ENCODE measurements at regions of chr19 and their contacts with region 1.

Region 1: DNA sequence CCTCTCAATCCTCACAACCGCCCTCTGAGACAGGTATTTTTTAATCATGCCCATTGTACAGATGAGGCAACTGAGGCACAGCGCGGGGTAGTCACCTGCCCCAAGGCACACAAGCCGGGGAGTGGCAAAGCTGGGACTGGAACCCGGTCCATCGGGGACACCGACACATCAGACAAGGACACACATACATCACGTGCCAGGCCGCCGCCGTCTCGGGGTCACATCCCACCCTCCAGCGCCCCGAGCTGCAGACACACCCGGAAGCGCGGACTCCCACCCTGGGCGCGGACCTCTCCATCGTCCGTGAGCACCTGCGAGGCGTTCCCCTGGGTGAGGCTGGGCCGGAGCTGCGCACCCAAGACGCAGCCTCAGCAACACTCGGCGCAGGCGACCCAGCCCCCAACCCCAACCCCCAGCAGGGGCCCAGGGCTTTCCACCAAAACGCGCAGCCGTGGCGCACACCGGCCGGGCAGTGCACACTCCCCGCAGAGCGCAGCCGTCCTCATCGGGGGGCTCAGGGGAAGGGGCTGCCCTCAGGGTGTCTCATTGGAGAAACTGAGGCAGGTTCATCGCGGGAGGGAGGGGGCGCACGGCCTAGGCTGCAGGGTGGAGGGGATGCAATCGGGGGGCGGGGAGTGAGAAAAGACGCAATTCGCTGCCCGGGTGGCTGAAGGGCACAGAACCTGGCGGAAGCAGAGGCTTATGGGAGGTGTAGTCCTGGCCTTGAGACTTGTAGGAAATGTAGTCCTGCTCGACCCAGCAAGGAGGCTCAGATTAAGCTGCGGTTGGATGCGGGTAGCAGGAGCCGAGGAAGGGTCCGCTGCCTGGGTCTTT is 1.9 kb upstream of the LMTK3 start:
- DNase-seq: peak in 8 of 9 donors; percentile 69 to 84 (median 78)
- ATAC-seq: peak; percentile 77
- H3K4me3 ChIP-seq: peak overlapping the region; percentile 72
- H3K4me3 Mint-ChIP-seq: no peak overlapping the region
- H3K27ac ChIP-seq: peak overlapping the region; percentile 82
- H3K27ac Mint-ChIP-seq: peak overlapping the region in 3 of 9 donors; percentile 68 to 91 (median 90)
- H3K4me1 ChIP-seq: peaks cover 21 to 22% of the 10 kb centered on the region in 2 donors
- H3K4me1 Mint-ChIP-seq: peaks cover 11 to 18% (median 13%) of the 10 kb centered on the region in 7 donors
- H3K27me3 ChIP-seq: no peaks in the 10 kb centered on the region
- H3K27me3 Mint-ChIP-seq: no peaks in the 10 kb centered on the region

Region 2: DNA sequence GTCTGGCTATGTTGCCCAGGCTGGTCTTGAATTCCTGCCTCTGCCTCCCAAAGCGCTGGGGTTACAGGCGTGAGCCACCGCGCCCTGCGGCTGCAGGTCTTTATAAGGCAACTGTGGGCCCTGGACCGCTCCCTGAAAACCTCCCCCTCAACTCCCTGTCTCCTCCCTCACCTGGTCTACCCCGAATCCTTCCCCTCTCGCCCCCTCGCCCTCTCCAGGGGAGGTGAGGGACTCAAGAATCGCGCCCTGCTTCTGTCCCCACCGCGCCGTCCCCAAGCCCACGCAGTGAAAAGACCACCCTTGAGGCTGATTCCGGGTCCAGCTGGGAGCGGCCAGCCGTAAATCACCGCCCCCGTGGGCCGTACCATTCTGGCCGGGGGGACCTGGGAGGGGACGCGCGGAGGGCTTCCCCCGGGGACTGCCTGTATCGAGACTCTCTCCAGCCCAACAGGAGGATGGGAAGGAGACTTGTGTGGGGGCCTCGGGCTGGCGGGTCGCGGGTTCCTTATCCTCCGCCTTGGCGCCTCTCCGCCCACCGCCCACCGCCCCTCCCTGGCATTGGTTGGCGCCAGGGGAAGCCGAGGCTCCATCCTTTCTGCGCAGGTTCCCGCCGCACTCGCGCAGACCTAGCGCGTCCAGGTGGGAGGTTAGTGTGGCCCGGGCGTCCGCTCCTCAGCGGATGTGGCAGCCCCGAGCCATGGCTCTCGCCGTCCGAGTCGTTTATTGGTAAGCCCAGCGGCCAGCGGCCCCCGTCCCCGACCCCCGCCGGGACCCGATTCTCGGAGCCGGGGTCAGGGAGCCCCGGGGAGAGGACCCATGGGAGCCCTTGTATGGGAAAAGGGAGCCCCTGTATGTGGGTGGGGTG is 735.2 kb before region 1 on chr19 and contains the start of gene SELENOW:
- CTCF ChIA-PET with region 1: no interaction called
- POLR2A ChIA-PET with region 1: no interaction called
- intact Hi-C with region 1: loop called in 1 of 2 experiments (anchors 5 kb)
- DNase-seq: peak; percentile 56 to 86 (median 76)
- ATAC-seq: peak; percentile 95
- H3K4me3 ChIP-seq: peak within 1 kb of the TSS; percentile 88
- H3K4me3 Mint-ChIP-seq: peak within 1 kb of the TSS; percentile 84 to 99 (median 93)
- H3K27ac ChIP-seq: peak within 1 kb of the TSS; percentile 87
- H3K27ac Mint-ChIP-seq: peak within 1 kb of the TSS; percentile 70 to 96 (median 91)
- H3K4me1 ChIP-seq: peaks cover 8 to 19% of the 10 kb centered on the region in 2 donors
- H3K4me1 Mint-ChIP-seq: peaks cover 8 to 40% (median 32%) of the 10 kb centered on the region in 7 donors
- H3K27me3 ChIP-seq: no peaks in the 10 kb centered on the region
- H3K27me3 Mint-ChIP-seq: no peaks in the 10 kb centered on the region
- total RNA-seq, gene SELENOW: 67.5 to 116 (median 101) TPM

Region 3: GRCh38 chr19:48363810-48364563 is 149.5 kb before region 1 on chr19 and contains the starts of genes SYNGR4 and TMEM143:
- CTCF ChIA-PET with region 1: no interaction called
- POLR2A ChIA-PET with region 1: no interaction called
- intact Hi-C with region 1: loop called (anchors 1 to 5 kb)
- DNase-seq: peak; percentile 91 to 100 (median 99)
- ATAC-seq: peak; percentile 96
- H3K4me3 ChIP-seq: peak within 1 kb of the TSS; percentile 87
- H3K4me3 Mint-ChIP-seq: peak within 1 kb of the TSS; percentile 80 to 97 (median 92)
- H3K27ac ChIP-seq: peak within 1 kb of the TSS; percentile 86
- H3K27ac Mint-ChIP-seq: peak within 1 kb of the TSS; percentile 89 to 98 (median 95)
- H3K4me1 ChIP-seq: peaks cover 9 to 13% of the 10 kb centered on the region in 2 donors
- H3K4me1 Mint-ChIP-seq: peaks cover 0 to 28% (median 6%) of the 10 kb centered on the region in 7 donors
- H3K27me3 ChIP-seq: no peaks in the 10 kb centered on the region
- H3K27me3 Mint-ChIP-seq: peaks cover 0 to 3% (median 0%) of the 10 kb centered on the region in 5 donors
- total RNA-seq, gene SYNGR4: not detected
- total RNA-seq, gene TMEM143: 11.6 to 39.8 (median 20.1) TPM

Region 4: DNA sequence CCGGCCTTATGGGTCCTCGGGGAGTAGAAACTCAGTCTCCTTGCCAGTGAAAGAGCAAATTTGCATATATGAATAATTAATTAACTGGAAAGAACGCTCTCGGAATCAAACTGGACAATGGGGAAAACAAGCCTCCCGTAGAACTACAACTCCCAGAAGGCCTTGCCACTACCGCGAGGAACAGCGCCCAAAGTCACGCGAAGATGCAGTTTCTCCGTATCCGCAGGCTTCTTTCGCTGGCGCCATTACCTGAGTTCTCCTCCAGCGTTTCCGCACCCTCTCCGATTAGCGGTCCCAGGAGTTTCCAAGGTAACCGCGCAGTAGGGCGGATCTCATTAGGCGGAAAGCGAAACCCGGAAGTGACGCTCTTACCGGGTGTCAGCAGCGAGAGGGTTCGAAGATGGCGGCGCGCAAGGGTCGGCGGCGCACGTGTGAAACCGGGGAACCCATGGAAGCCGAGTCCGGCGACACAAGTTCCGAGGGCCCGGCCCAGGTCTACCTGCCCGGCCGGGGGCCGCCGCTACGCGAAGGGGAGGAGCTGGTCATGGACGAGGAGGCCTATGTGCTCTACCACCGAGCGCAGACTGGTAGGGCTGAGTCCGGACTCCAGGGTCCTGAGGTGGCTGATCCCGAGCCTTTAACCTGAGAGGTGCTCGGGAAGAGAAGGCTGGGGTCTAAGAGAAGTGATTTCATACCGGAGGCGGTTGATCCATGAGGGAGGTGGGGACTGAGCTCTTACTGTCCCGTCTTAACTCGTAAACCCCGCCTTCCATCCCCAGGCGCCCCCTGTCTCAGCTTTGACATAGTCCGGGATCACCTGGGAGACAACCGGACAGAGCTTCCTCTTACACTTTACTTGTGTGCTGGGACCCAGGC is 67.7 kb before region 1 on chr19 and contains the start of gene GRWD1:
- CTCF ChIA-PET with region 1: interaction called, 3 read pairs
- POLR2A ChIA-PET with region 1: no interaction called
- intact Hi-C with region 1: loop called in 1 of 2 experiments (anchors 1 kb)
- DNase-seq: peak; percentile 63 to 98 (median 93)
- ATAC-seq: peak; percentile 95
- H3K4me3 ChIP-seq: peak within 1 kb of the TSS; percentile 80
- H3K4me3 Mint-ChIP-seq: peak within 1 kb of the TSS; percentile 87 to 96 (median 93)
- H3K27ac ChIP-seq: peak within 1 kb of the TSS; percentile 83
- H3K27ac Mint-ChIP-seq: peak within 1 kb of the TSS; percentile 90 to 98 (median 95)
- H3K4me1 ChIP-seq: peaks cover 20 to 22% of the 10 kb centered on the region in 2 donors
- H3K4me1 Mint-ChIP-seq: peaks cover 19 to 44% (median 37%) of the 10 kb centered on the region in 7 donors
- H3K27me3 ChIP-seq: peaks cover 0 to 8% of the 10 kb centered on the region in 2 donors
- H3K27me3 Mint-ChIP-seq: peaks cover 12 to 33% (median 21%) of the 10 kb centered on the region in 5 donors
- total RNA-seq, gene GRWD1: 26.1 to 45.8 (median 36.3) TPM

Region 5: GRCh38 chr19:48501496-48502350 is 11.8 kb before region 1 on chr19:
- CTCF ChIA-PET with region 1: interaction called, 5 read pairs
- POLR2A ChIA-PET with region 1: interaction called, 3 read pairs
- intact Hi-C with region 1: loop called in 1 of 2 experiments (anchors 1 kb)
- DNase-seq: peak in 8 of 9 donors; percentile 64 to 89 (median 79)
- ATAC-seq: peak; percentile 83
- H3K4me3 ChIP-seq: peak overlapping the region; percentile 37
- H3K4me3 Mint-ChIP-seq: peak overlapping the region; percentile 70 to 86 (median 80)
- H3K27ac ChIP-seq: peak overlapping the region; percentile 60
- H3K27ac Mint-ChIP-seq: peak overlapping the region; percentile 59 to 95 (median 84)
- H3K4me1 ChIP-seq: peaks cover 0 to 15% of the 10 kb centered on the region in 2 donors
- H3K4me1 Mint-ChIP-seq: peaks cover 0 to 29% (median 19%) of the 10 kb centered on the region in 7 donors
- H3K27me3 ChIP-seq: no peaks in the 10 kb centered on the region
- H3K27me3 Mint-ChIP-seq: peaks cover 0 to 9% (median 0%) of the 10 kb centered on the region in 5 donors

Region 6: GRCh38 chr19:48618916-48619691 is 105.6 kb after region 1 on chr19 and contains the starts of genes RPL18 and SPHK2:
- CTCF ChIA-PET with region 1: interaction called, 3 read pairs
- POLR2A ChIA-PET with region 1: no interaction called
- intact Hi-C with region 1: loop called in 1 of 2 experiments (anchors 1 kb)
- DNase-seq: peak; percentile 89 to 97 (median 95)
- ATAC-seq: peak; percentile 89
- H3K4me3 ChIP-seq: peak within 1 kb of the TSS; percentile 96
- H3K4me3 Mint-ChIP-seq: peak within 1 kb of the TSS; percentile 88 to 99 (median 96)
- H3K27ac ChIP-seq: peak within 1 kb of the TSS; percentile 95
- H3K27ac Mint-ChIP-seq: peak within 1 kb of the TSS; percentile 96 to 99 (median 98)
- H3K4me1 ChIP-seq: peaks cover 26 to 45% of the 10 kb centered on the region in 2 donors
- H3K4me1 Mint-ChIP-seq: peaks cover 40 to 64% (median 54%) of the 10 kb centered on the region in 7 donors
- H3K27me3 ChIP-seq: no peaks in the 10 kb centered on the region
- H3K27me3 Mint-ChIP-seq: no peaks in the 10 kb centered on the region
- total RNA-seq, gene RPL18: 1,570 to 2,826 (median 2,745) TPM
- total RNA-seq, gene SPHK2: 20.1 to 34.7 (median 30.5) TPM

Region 7: GRCh38 chr19:48965040-48965805 is 451.7 kb after region 1 on chr19 and contains the start of gene FTL:
- CTCF ChIA-PET with region 1: no interaction called
- POLR2A ChIA-PET with region 1: no interaction called
- intact Hi-C with region 1: loop called in 1 of 2 experiments (anchors 5 kb)
- DNase-seq: peak; percentile 77 to 93 (median 84)
- ATAC-seq: peak; percentile 85
- H3K4me3 ChIP-seq: peak within 1 kb of the TSS; percentile 86
- H3K4me3 Mint-ChIP-seq: peak within 1 kb of the TSS; percentile 94 to 100 (median 99)
- H3K27ac ChIP-seq: peak within 1 kb of the TSS; percentile 73
- H3K27ac Mint-ChIP-seq: peak within 1 kb of the TSS; percentile 93 to 100 (median 97)
- H3K4me1 ChIP-seq: peaks cover 30 to 37% of the 10 kb centered on the region in 2 donors
- H3K4me1 Mint-ChIP-seq: peaks cover 42 to 69% (median 62%) of the 10 kb centered on the region in 7 donors
- H3K27me3 ChIP-seq: no peaks in the 10 kb centered on the region
- H3K27me3 Mint-ChIP-seq: no peaks in the 10 kb centered on the region
- total RNA-seq, gene FTL: 888 to 1,929 (median 1,286) TPM

Measured in naive thymus-derived CD4-positive, alpha-beta T cell (primary cell).